ENCODE measurements at regions of chr1 and their contacts with region 1.

Region 1: DNA sequence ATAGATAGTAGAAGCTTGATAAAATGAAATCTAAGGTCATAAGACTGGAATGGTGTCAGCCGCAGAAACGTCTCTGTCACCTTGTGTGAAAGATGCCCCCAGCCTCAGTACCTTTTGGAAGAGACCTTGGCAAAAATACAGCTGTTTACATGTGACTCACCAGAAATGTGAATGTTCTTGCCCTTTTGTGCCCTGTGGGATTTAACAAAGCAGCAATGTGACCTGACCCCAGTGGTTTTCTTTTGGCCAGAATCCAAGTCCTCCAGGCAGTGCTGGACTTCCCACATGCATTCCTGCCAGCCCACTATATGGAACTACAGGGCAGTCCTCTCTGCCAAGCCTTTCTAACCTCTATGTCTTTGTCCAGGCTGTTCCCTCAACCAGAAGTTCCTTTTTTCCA is 27.2 kb upstream of the LRRC8C start:
- DNase-seq: no peak
- H3K4me3 Mint-ChIP-seq: no peak overlapping the region
- H3K27ac Mint-ChIP-seq: peak overlapping the region; percentile 99
- H3K4me1 Mint-ChIP-seq: peaks cover 92% of the 10 kb centered on the region
- H3K27me3 Mint-ChIP-seq: no peaks in the 10 kb centered on the region

Region 2: GRCh38 chr1:89125913-89126580 is 479.6 kb before region 1 on chr1 and contains the start of gene GBP2:
- CTCF ChIA-PET with region 1: no interaction called
- POLR2A ChIA-PET with region 1: interaction called, 16 read pairs
- DNase-seq: peak; percentile 32
- H3K4me3 Mint-ChIP-seq: peak within 1 kb of the TSS; percentile 99
- H3K27ac Mint-ChIP-seq: peak within 1 kb of the TSS; percentile 97
- H3K4me1 Mint-ChIP-seq: peaks cover 55% of the 10 kb centered on the region
- H3K27me3 Mint-ChIP-seq: no peaks in the 10 kb centered on the region
- total RNA-seq, gene GBP2: 280 to 281 TPM

Region 3: DNA sequence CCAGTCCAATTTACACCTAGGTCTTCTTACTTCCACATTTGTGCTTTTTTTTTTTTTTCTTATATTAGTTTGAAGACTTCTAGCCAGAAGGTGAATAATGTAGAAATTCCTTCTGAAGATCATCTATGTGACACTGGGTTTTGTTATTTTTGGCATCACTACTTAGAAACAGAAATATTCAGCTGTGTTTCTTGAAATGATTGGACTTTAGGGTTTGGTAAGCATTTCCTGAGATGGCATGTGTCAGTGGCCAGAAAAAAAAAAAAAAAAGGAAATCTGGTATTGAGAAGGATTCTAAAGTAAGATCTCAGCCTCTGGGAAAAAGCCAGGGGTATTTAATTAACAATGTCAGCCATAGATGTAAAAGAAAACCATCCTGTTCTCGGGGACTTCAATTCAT is 16.2 kb before region 1 on chr1:
- CTCF ChIA-PET with region 1: interaction called, 7 read pairs
- POLR2A ChIA-PET with region 1: interaction called, 13 read pairs
- DNase-seq: no peak
- H3K4me3 Mint-ChIP-seq: no peak overlapping the region
- H3K27ac Mint-ChIP-seq: peak overlapping the region; percentile 51
- H3K4me1 Mint-ChIP-seq: peaks cover 76% of the 10 kb centered on the region
- H3K27me3 Mint-ChIP-seq: no peaks in the 10 kb centered on the region

Region 4: DNA sequence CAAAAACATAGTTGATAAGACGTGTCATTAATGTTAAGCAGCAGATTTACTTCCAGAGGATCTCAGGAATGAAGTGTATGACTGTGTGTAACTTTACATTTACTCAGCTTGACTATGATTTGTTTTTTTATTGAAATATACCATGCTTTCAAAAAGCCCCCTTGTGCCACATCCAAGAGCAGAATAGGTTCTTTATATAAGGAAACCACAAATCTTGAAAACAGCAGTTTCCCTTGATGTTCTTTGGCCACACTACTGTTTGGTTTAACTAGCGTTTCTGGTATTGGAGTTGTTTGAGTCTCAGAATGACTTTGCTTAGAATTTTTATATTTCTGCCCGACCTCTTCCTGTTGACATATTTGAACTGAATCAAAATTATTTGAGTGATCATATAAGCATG is 52.2 kb after region 1 on chr1:
- CTCF ChIA-PET with region 1: interaction called, 3 read pairs
- POLR2A ChIA-PET with region 1: interaction called, 54 read pairs
- DNase-seq: no peak
- H3K4me3 Mint-ChIP-seq: peak overlapping the region; percentile 15
- H3K27ac Mint-ChIP-seq: peak overlapping the region; percentile 81
- H3K4me1 Mint-ChIP-seq: peaks cover 88% of the 10 kb centered on the region
- H3K27me3 Mint-ChIP-seq: no peaks in the 10 kb centered on the region

Region 5: DNA sequence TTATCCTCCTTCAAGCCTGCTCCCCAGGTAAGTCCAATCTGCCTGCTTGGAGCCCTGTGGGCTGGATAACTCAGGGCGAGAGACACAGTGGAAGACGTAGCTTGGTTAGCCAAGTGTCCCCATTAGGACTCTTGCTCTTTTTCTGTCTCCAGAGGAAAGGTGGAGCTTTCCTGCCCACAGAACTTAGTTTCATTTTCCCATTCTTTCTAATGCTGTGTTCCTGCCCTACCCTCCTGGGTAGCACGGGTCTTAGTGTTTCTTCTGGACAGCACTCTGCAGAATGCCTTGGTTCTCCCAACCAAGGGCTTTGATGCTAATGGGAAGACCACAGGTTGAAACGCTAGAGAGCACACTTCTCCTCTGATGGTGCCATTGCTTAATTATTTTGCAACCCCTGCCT is 122.7 kb after region 1 on chr1:
- CTCF ChIA-PET with region 1: interaction called, 6 read pairs
- POLR2A ChIA-PET with region 1: interaction called, 14 read pairs
- DNase-seq: no peak
- H3K4me3 Mint-ChIP-seq: peak overlapping the region; percentile 48
- H3K27ac Mint-ChIP-seq: peak overlapping the region; percentile 57
- H3K4me1 Mint-ChIP-seq: peaks cover 88% of the 10 kb centered on the region
- H3K27me3 Mint-ChIP-seq: no peaks in the 10 kb centered on the region

Region 6: GRCh38 chr1:89843281-89844121 is 237.8 kb after region 1 on chr1:
- CTCF ChIA-PET with region 1: interaction called, 4 read pairs
- POLR2A ChIA-PET with region 1: interaction called, 17 read pairs
- DNase-seq: peak; percentile 81
- H3K4me3 Mint-ChIP-seq: peak overlapping the region; percentile 95
- H3K27ac Mint-ChIP-seq: peak overlapping the region; percentile 84
- H3K4me1 Mint-ChIP-seq: peaks cover 68% of the 10 kb centered on the region
- H3K27me3 Mint-ChIP-seq: no peaks in the 10 kb centered on the region

Measured in activated CD4-positive, alpha-beta memory T cell treated with anti-CD3 and anti-CD28 coated beads, Interleukin-2, amount 10 ng/mL, durations not matched to agents 7 days and 5 days (primary cell).